Activated CD8-positive, alpha-beta T cell treated with anti-CD3 and anti-CD28 coated beads for 36 hours (primary cell): ENCODE measurements at regions of chr1 and their contacts with region 1.

Region 1: DNA sequence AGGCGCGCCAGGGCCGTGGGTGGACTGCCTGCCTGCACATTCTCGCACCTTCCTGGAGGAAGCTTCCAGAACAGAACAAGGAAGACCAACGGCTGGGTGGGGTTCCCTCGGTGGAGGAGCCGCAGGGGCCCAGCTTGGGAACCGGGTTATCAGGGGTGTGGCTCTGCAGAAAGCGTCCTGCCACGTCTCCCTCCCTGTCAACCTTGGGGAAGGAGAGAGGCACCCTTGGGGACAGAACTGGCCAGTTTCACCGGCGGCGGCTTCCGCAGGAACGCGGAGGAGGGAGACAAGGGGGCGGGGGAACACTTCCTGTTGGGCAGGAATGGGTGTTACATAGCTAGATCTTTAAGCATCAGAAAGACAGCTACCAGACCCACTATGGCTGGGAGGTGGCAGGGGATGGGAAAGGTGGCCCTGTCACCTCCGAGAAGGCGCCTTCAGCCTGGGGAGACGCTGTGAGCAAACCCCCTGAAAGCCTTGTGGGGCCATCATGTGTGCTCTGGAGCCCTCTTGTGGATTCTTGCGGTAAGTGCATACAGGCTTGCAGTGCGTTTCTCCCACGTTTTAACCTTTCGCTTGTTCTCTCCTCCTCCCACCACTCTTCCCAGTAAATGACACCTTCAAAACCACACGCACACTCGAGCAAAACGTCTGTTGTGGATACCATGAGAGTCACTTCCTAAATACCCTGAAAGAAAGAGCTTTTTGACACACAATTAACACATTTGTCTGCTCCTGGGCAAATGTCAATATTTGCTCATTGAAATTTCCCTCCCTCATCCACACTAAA is 3.8 kb upstream of the PLEKHA6 start:
- DNase-seq: peak; percentile 89
- ATAC-seq: peak; percentile 87
- H3K4me3 Mint-ChIP-seq: peak overlapping the region; percentile 51
- H3K27ac Mint-ChIP-seq: peak overlapping the region; percentile 80
- H3K4me1 Mint-ChIP-seq: peaks cover 46% of the 10 kb centered on the region
- H3K27me3 Mint-ChIP-seq: peaks cover 4% of the 10 kb centered on the region
- CTCF ChIP-seq: peak; percentile 95

Region 2: DNA sequence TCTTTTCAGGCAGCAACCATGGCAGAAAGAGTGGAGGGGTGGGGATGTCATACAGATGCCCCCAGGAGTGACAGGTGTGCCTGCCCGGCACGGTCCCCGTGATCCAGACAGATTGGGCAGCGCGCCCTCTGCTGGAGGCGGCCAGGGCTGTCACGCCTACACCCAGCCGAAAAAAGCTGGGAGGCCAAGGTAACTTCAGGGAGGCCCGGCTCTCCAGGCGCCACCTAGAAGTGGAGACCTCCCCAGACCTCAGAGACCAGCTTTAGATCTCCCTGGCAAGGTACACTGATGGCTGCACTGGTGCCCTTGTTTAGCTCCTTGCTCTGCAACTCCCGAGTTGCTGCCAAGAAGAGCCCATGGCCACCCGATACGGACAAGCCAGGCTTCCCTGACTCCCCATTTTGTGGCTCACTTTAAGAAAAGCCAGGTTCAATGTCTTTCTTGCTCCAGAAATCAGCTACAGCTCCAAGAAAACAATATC is 156.4 kb before region 1 on chr1:
- CTCF ChIA-PET with region 1: interaction called, 43 read pairs
- POLR2A ChIA-PET with region 1: no interaction called
- intact Hi-C with region 1: no loop called
- DNase-seq: peak; percentile 86
- ATAC-seq: peak; percentile 98
- H3K4me3 Mint-ChIP-seq: no peak overlapping the region
- H3K27ac Mint-ChIP-seq: no peak overlapping the region
- H3K4me1 Mint-ChIP-seq: peaks cover 5% of the 10 kb centered on the region
- H3K27me3 Mint-ChIP-seq: peaks cover 22% of the 10 kb centered on the region
- CTCF ChIP-seq: peak; percentile 96

Region 3: GRCh38 chr1:204285406-204286305 is 77.9 kb before region 1 on chr1:
- CTCF ChIA-PET with region 1: interaction called, 14 read pairs
- POLR2A ChIA-PET with region 1: no interaction called
- intact Hi-C with region 1: no loop called
- DNase-seq: no peak
- ATAC-seq: no peak
- H3K4me3 Mint-ChIP-seq: no peak overlapping the region
- H3K27ac Mint-ChIP-seq: no peak overlapping the region
- H3K4me1 Mint-ChIP-seq: peaks cover 22% of the 10 kb centered on the region
- H3K27me3 Mint-ChIP-seq: no peaks in the 10 kb centered on the region
- CTCF ChIP-seq: no peak

Region 4: DNA sequence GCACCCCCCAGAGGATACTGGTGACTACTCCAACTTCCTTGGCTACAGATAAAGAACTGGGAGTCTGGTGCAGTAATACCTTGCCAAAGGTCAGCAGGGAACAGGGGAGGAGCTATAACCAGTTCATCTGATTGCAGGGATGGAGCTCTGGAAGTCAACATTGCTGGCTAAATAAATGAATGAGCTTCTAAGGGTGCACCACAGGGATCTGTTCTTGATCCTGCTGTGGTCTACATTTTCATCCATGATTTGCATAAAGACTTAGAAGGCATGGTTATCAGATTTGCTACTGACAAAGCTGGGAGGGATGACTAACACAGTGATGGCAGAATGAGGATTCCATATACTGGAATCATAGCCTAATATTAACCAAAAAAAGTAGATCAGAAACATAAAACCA is 22.1 kb before region 1 on chr1:
- CTCF ChIA-PET with region 1: interaction called, 10 read pairs
- POLR2A ChIA-PET with region 1: interaction called, 3 read pairs
- intact Hi-C with region 1: no loop called
- DNase-seq: no peak
- ATAC-seq: no peak
- H3K4me3 Mint-ChIP-seq: no peak overlapping the region
- H3K27ac Mint-ChIP-seq: no peak overlapping the region
- H3K4me1 Mint-ChIP-seq: peaks cover 7% of the 10 kb centered on the region
- H3K27me3 Mint-ChIP-seq: peaks cover 4% of the 10 kb centered on the region
- CTCF ChIP-seq: no peak

Region 5: DNA sequence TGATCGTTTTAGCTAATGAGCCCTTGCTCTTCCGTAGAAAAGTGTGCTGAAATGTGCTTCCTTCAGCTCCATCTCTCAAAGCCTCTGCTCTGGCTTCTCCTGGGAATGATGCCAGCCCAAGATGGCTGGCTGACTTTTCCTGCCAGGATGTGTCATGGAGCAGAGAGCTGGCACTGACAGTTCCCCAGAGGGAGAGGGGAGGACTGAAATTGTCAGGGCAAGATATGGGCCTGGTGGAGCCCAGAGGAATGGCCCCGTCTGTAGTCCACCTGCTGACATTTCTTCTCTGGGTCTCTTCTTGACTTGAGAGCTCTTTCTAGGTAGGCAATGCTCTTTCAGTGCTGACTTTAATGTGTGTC is 21.4 kb after region 1 on chr1:
- CTCF ChIA-PET with region 1: interaction called, 32 read pairs
- POLR2A ChIA-PET with region 1: interaction called, 3 read pairs
- intact Hi-C with region 1: no loop called
- DNase-seq: no peak
- ATAC-seq: no peak
- H3K4me3 Mint-ChIP-seq: no peak overlapping the region
- H3K27ac Mint-ChIP-seq: no peak overlapping the region
- H3K4me1 Mint-ChIP-seq: peaks cover 4% of the 10 kb centered on the region
- H3K27me3 Mint-ChIP-seq: peaks cover under 1% of the 10 kb centered on the region
- CTCF ChIP-seq: no peak

Region 6: DNA sequence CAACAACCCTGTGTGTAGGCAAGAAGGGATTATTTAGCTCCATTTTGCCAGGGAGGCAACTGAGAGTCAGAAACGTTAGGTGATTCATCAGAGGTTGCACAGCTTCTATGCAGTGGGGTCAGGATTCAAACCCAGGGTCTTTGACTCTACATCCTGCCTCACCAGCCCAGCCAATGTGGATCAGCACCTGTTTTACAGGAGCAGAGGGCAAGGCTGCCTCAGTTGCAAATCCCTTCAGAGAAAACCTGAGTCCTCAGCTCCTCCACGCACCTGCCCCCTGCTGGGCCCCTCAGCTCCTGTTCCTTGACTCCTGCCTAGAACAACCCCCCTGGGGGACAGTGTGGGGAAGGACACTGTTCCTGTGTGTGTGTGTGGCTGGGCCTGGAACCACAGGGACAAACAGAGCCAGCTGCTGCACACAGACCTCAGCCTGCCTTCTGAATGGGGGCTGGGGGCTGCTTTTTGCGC is 260.4 kb after region 1 on chr1:
- CTCF ChIA-PET with region 1: no interaction called
- POLR2A ChIA-PET with region 1: no interaction called
- intact Hi-C with region 1: no loop called
- DNase-seq: peak; percentile 32
- ATAC-seq: peak; percentile 69
- H3K4me3 Mint-ChIP-seq: no peak overlapping the region
- H3K27ac Mint-ChIP-seq: no peak overlapping the region
- H3K4me1 Mint-ChIP-seq: no peaks in the 10 kb centered on the region
- H3K27me3 Mint-ChIP-seq: no peaks in the 10 kb centered on the region
- CTCF ChIP-seq: no peak